ENCODE measurements at regions of chr2 and their contacts with region 1.

Region 1: DNA sequence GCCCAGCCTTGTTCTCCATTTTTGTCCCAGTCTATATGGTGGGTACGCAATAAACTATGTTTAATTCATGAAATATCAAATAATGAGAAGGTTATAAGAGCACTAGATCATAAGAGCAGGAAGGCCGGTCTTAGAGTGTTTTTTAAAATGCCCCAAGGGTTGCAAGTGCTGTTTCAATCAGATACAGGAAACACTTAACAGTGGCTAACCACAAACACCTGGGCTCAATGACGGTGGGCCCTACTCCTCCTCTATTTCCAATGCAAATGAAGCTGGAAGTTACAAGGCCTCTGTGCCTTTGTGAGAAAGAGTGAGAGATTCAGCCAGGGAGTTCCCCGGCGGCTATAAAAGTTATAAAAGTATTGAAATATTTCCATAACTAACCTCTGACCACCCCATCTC is 18.9 kb upstream of the WDR33 start:
- DNase-seq: peak; percentile 13 to 87 (median 38)
- ATAC-seq: peak; percentile 98
- H3K4me3 ChIP-seq: no peak overlapping the region
- H3K4me3 Mint-ChIP-seq: peak overlapping the region; percentile 71
- H3K27ac ChIP-seq: peak overlapping the region; percentile 13 to 74
- H3K27ac Mint-ChIP-seq: peak overlapping the region; percentile 90
- H3K4me1 ChIP-seq: peaks cover 29% of the 10 kb centered on the region
- H3K4me1 Mint-ChIP-seq: peaks cover 31% of the 10 kb centered on the region
- H3K27me3 ChIP-seq: no peaks in the 10 kb centered on the region
- H3K27me3 Mint-ChIP-seq: no peaks in the 10 kb centered on the region
- CTCF ChIP-seq: no peak

Region 2: GRCh38 chr2:127810619-127811396 is 19.0 kb before region 1 on chr2 and contains the start of gene WDR33:
- CTCF ChIA-PET with region 1: interaction called, 4 read pairs
- POLR2A ChIA-PET with region 1: interaction called, 7 read pairs
- intact Hi-C with region 1: loop called in 1 of 2 experiments (anchors 1 kb)
- DNase-seq: peak; percentile 89 to 98 (median 93)
- ATAC-seq: peak; percentile 96
- H3K4me3 ChIP-seq: peak within 1 kb of the TSS; percentile 83
- H3K4me3 Mint-ChIP-seq: peak within 1 kb of the TSS; percentile 97
- H3K27ac ChIP-seq: peak within 1 kb of the TSS; percentile 95 to 97
- H3K27ac Mint-ChIP-seq: peak within 1 kb of the TSS; percentile 99
- H3K4me1 ChIP-seq: peaks cover 36% of the 10 kb centered on the region
- H3K4me1 Mint-ChIP-seq: peaks cover 54% of the 10 kb centered on the region
- H3K27me3 ChIP-seq: no peaks in the 10 kb centered on the region
- H3K27me3 Mint-ChIP-seq: no peaks in the 10 kb centered on the region
- CTCF ChIP-seq: no peak
- total RNA-seq, gene WDR33: 59.8 to 61.5 TPM

Measured in CD4-positive, alpha-beta T cell (primary cell).